Breast epithelium (tissue), 4 donors: ENCODE measurements at regions of chr10 and their contacts with region 1.

Region 1: DNA sequence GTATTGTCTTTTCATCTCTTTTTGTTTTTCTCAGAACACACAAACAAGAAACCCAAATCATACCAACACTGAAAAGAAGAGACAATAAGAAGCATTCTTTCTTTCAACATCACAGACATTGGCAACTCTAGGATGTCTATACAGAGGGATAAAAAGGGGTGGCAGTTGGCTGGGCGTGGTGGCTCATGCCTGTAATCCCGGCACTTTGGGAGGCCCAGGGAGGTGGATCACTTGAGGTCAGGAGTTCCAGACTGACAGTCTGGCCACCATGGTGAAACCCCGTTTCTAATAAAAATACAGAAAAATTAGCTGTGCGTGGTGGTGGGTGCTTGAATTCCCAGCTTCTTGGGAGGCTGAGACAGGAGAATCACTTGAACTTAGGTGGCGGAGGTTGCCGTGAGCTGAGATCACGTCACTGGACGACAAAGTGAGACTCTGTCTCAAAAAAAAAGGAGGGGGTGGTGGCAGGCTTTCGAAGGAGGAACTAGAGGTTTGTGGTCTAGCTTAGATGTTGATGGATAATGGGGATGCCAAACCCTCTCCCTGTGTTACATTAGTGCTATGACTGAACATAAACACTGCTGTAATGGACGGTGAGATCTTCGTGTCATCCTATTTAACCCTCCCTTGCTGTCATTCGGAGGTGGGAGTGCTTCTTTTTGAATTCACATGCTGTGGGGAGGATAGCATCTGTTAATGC is 9.4 kb downstream of the CNNM2 start:
- DNase-seq: no peak
- H3K4me3 ChIP-seq: no peak overlapping the region
- H3K27ac ChIP-seq: no peak overlapping the region
- H3K4me1 ChIP-seq: no peaks in the 10 kb centered on the region
- H3K27me3 ChIP-seq: no peaks in the 10 kb centered on the region
- CTCF ChIP-seq: no peak
- POLR2A ChIP-seq: no peak

Region 2: GRCh38 chr10:102220612-102221011 is 706.8 kb before region 1 on chr10:
- intact Hi-C with region 1: no loop called
- DNase-seq: no peak
- H3K4me3 ChIP-seq: no peak overlapping the region
- H3K27ac ChIP-seq: no peak overlapping the region
- H3K4me1 ChIP-seq: no peaks in the 10 kb centered on the region
- H3K27me3 ChIP-seq: no peaks in the 10 kb centered on the region
- CTCF ChIP-seq: no peak
- POLR2A ChIP-seq: no peak

Region 3: DNA sequence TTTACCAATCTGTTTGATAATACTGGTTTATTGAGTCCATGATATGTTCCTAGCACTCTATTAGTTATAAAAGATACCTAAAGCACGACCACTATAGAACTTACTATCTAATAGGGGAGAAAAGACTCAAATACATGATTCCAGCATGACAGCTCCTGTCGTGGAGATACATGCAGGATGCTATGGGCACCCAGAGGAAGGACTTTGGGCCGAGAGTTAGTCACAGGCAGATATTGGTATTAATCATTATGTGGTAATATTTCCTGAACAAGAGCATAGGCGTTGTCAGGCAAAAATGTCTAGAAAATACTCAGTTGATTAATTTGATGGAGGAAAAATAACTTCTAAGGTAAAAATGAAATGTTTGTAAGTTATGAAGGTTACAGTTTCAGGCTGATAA is 22.5 kb after region 1 on chr10:
- intact Hi-C with region 1: loop called (anchors 2 kb)
- DNase-seq: no peak
- H3K4me3 ChIP-seq: no peak overlapping the region
- H3K27ac ChIP-seq: no peak overlapping the region
- H3K4me1 ChIP-seq: no peaks in the 10 kb centered on the region
- H3K27me3 ChIP-seq: no peaks in the 10 kb centered on the region
- CTCF ChIP-seq: no peak
- POLR2A ChIP-seq: no peak

Region 4: DNA sequence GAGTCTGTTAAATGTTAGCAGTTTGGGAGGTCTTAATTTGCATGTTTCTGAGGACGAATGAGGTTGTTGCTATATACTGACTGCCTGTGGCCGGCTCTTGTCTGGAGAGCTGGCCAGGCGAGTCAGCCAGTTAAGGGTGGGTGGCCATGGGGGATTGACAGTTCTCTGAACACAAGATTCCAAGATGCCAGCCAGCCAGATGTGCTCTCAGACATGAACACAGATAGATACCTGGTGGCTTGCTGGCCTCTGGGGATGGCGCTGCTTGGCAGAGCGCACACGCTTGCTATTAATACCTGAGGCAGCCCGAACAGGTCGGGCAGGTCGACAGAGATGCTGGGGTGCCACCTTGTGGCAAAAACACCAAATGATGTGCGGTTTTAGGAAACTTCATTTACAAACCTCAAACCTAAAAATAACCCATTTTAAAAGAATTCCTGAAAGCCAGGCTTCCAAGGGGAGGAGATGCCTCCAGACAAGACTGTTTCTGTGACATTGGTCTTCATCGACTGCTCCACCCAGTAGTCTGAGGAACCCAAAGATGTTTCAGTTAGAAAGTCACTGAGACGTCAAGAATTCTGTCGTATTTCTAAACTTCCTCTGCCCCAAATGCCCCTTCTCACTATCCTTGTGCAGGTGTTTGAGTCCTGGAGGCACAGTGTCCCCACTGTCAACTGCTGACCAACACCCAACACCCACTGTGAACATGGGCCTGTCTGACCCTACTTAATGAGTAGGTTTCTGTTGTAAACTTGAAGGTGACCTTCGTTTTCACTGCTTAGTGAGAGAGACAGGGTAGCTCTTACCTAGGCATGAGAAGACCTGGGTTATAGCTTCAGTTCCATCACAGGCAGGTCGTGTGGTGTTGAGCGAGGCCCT is 142.2 kb after region 1 on chr10:
- intact Hi-C with region 1: loop called (anchors 10 kb)
- DNase-seq: peak; percentile 62 to 75
- H3K4me3 ChIP-seq: no peak overlapping the region
- H3K27ac ChIP-seq: no peak overlapping the region
- H3K4me1 ChIP-seq: no peaks in the 10 kb centered on the region
- H3K27me3 ChIP-seq: no peaks in the 10 kb centered on the region
- CTCF ChIP-seq: peak; percentile 51 to 76 (median 73)
- POLR2A ChIP-seq: no peak